AG04449 (cell line): ENCODE measurements at regions of chr7 and their contacts with region 1.

Region 1: GRCh38 chr7:32942786-32943653 is 14.2 kb upstream of the FKBP9 start:
- DNase-seq: no peak
- H3K4me3 ChIP-seq: peak overlapping the region; percentile 78
- CTCF ChIP-seq: peak; percentile 69

Region 2: GRCh38 chr7:32957326-32958045 is 14.5 kb after region 1 on chr7 and contains the start of gene FKBP9:
- CTCF ChIA-PET with region 1: interaction called, 19 read pairs
- POLR2A ChIA-PET with region 1: interaction called, 13 read pairs
- DNase-seq: no peak
- H3K4me3 ChIP-seq: peak within 1 kb of the TSS; percentile 87
- CTCF ChIP-seq: no peak

Region 3: GRCh38 chr7:33050535-33051318 is 107.7 kb after region 1 on chr7:
- CTCF ChIA-PET with region 1: interaction called, 14 read pairs
- POLR2A ChIA-PET with region 1: no interaction called
- DNase-seq: no peak
- H3K4me3 ChIP-seq: no peak overlapping the region
- CTCF ChIP-seq: peak; percentile 36